Gastrocnemius medialis (tissue), 4 donors: ENCODE measurements at regions of chr21 and their contacts with region 1.

Region 1: DNA sequence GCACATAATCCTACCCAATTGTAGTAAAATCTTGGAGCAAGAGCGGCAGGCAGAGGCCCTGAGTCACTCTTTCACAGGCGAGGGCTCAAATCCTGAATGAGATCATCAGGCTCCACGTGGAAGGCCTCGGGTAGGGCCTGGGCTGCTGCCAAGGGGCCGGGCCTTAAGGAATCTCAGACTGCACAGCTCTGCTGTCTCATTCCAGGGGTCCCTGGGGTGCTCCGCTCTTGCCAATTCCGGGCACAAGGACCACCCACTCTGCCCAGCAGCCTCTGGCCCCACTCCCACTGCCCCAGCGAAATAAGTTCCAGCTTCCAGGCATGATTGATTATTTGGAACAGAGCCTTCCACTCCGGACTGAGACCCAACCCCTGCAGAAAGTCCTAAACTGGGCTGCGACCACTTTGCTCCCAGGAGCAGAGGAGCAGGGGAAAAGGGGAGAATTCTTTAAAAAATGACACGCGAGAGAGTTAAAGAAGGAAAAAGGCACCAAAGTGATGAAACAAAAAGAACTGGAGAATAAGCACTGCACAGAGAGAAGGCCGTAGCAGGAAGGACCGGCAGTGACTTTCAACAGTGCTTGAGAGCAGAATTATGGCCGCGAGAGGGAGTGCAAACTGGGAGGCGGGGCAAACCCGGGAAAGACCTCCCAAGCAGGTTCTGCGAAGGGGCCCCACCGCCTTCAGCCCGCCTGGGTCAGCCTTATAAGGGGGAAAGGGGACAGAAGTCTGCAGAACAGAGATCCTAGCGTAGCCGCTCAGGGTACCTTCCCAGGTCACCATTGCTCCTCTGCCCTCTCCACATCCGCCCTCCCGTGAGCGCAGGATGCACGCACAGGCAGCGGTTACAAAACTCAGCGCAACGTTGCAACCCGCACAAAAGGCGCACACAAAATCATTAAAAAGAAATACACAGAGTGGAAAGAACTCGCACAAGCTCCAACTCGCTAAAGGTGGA is 2.0 kb downstream of the ADAMTS1 start:
- DNase-seq: peak; percentile 85 to 96
- ATAC-seq: peak; percentile 61 to 62
- H3K4me3 ChIP-seq: peak overlapping the region; percentile 65 to 88 (median 80)
- H3K27ac ChIP-seq: peak overlapping the region; percentile 88 to 96 (median 90)
- H3K4me1 ChIP-seq: peaks cover 29 to 43% of the 10 kb centered on the region in 2 donors
- H3K27me3 ChIP-seq: no peaks in the 10 kb centered on the region
- CTCF ChIP-seq: peak in 2 of 5 experiments; percentile 48 to 54
- POLR2A ChIP-seq: peak; percentile 28 to 57

Region 2: DNA sequence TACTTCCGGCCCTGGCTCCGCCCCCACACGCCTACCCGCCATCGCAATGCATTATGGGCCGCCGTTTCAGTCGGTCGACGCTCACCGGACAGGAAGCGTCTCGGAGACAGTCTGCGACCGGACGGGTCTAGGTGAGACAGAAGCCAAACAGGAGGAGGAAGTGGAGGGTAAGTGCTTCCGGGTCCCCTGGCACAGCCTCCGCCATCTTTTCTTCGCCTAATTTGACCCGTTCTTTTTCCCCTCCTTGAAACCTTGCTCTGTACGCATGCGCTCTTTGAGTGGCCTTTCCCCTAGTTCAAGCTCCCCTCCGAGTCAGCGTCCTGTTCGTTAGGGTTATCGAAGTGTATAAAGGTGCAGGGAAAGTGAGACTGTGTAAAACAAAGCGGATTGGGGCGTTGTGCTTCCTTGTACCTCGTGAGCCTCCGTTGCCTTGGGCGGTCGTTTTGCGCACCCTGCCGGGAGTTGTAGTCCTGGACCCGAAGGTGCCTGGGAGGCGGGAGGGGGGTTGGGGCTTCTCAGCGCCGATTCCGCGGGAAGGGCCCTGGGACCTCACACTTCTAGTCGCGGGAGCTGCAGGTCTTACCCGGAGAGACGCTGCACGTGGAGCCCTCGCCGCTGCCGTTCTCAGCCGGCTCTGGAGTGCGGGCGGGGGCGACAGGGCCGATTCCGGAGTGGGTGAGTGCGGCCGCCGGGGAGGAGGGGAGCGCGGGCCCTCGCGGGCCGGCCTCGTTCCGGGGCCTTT is 1108.2 kb before region 1 on chr21 and contains the starts of genes ATP5PF and GABPA:
- in situ Hi-C with region 1: no loop called
- intact Hi-C with region 1: loop called (anchors 2 kb)
- DNase-seq: peak; percentile 97 to 98
- ATAC-seq: peak; percentile 90 to 94
- H3K4me3 ChIP-seq: peak within 1 kb of the TSS; percentile 81 to 98 (median 92)
- H3K27ac ChIP-seq: peak within 1 kb of the TSS; percentile 94 to 99 (median 98)
- H3K4me1 ChIP-seq: peaks cover 57 to 58% of the 10 kb centered on the region in 2 donors
- H3K27me3 ChIP-seq: no peaks in the 10 kb centered on the region
- CTCF ChIP-seq: no peak
- POLR2A ChIP-seq: peak in 1 of 2 donors; percentile 46
- total RNA-seq, gene ATP5PF: 155 to 306 (median 198) TPM
- total RNA-seq, gene GABPA: 10.6 to 26.2 (median 15.5) TPM

Region 3: DNA sequence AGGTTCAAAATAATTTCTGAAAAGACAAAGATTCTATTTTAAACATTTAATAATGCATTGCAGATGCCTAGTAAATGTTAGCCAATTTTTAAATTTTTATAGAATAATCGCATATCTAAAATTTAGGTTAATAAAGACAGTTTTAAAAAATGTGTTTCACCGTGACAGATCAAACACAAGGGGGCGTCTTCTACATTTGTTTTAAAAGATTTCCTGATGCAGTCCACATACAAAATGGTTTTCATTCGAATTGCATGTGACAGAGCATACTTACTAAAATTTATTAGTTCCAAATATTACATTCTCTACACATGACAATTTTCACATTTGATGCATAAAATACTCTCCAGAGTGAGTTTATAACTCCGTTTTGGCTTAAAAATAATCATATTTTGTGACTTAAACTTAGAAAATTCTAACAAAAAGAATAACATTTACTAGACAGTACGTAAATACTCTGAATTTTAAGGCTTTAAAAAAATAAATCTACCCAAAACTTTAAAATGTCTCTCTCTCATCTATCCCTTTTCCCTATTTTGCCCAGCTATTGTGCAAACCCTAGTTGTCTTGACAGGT is 73.6 kb before region 1 on chr21:
- in situ Hi-C with region 1: loop called in 2 of 4 experiments (anchors 5 to 10 kb)
- intact Hi-C with region 1: loop called (anchors 2 kb)
- DNase-seq: no peak
- ATAC-seq: no peak
- H3K4me3 ChIP-seq: no peak overlapping the region
- H3K27ac ChIP-seq: no peak overlapping the region
- H3K4me1 ChIP-seq: peaks cover 0 to 5% of the 10 kb centered on the region in 2 donors
- H3K27me3 ChIP-seq: no peaks in the 10 kb centered on the region
- CTCF ChIP-seq: peak in 4 of 5 experiments; percentile 39 to 68 (median 49)
- POLR2A ChIP-seq: no peak

Region 4: DNA sequence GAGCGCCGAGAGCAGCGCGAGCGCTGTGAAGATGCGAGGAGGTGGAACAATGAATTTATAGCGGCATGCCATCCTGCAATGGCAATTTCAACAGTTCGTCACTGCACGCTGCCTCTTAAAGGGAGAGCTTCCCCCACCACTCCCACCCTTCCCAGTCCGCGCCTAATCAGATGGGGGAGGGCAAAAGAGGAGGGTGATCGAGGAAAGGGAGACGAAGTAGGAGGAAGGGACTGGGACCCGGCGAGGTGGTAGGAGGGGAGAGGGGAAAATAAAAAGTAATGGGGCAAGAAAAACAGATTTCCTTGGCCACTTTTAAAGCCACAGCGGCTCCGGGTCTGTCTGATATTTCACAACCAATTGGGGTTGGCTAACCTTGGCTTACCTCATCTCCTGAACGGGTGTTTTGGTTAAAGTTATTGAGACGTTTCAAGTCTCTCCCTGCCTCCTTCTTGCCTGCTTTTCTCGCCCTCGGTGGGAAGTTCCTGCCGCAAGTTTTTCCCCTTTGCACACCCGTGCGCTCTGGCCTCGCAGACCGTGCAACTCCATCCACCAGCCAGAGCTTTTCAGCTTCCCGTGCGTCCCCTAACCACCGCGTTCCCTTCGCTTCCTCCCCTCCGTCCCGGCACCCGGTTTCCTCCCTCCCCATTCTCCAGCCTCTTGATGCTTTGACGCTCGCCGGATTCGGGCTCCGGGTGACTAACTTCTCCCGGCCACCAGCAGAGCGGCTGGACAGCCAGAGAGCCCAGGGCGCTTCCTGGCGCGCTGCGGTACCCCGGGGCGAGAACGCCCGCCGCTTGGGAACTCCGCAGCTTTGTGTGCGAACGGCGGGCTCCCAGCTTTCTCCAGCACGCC is 124.0 kb after region 1 on chr21 and contains the start of gene ADAMTS5:
- in situ Hi-C with region 1: no loop called
- intact Hi-C with region 1: loop called (anchors 1 kb)
- DNase-seq: peak; percentile 48 to 59
- ATAC-seq: peak; percentile 54 to 65
- H3K4me3 ChIP-seq: peak within 1 kb of the TSS; percentile 63 to 71 (median 68)
- H3K27ac ChIP-seq: peak within 1 kb of the TSS; percentile 72 to 79 (median 77)
- H3K4me1 ChIP-seq: peaks cover 0 to 19% of the 10 kb centered on the region in 2 donors
- H3K27me3 ChIP-seq: peaks cover 7 to 18% (median 9%) of the 10 kb centered on the region in 3 donors
- CTCF ChIP-seq: no peak
- POLR2A ChIP-seq: peak in 1 of 2 donors; percentile 60
- total RNA-seq, gene ADAMTS5: 4.3 to 9.0 (median 7.4) TPM

Region 5: GRCh38 chr21:27636656-27637055 is 793.4 kb after region 1 on chr21:
- in situ Hi-C with region 1: no loop called
- intact Hi-C with region 1: loop called (anchors 1 kb)
- DNase-seq: peak; percentile 73 to 85
- ATAC-seq: peak; percentile 99 to 100
- H3K4me3 ChIP-seq: peak overlapping the region in 1 of 4 donors; percentile 3
- H3K27ac ChIP-seq: peak overlapping the region; percentile 83 to 93 (median 88)
- H3K4me1 ChIP-seq: peaks cover 10 to 18% of the 10 kb centered on the region in 2 donors
- H3K27me3 ChIP-seq: no peaks in the 10 kb centered on the region
- CTCF ChIP-seq: no peak
- POLR2A ChIP-seq: peak in 1 of 2 donors; percentile 43

Region 6: DNA sequence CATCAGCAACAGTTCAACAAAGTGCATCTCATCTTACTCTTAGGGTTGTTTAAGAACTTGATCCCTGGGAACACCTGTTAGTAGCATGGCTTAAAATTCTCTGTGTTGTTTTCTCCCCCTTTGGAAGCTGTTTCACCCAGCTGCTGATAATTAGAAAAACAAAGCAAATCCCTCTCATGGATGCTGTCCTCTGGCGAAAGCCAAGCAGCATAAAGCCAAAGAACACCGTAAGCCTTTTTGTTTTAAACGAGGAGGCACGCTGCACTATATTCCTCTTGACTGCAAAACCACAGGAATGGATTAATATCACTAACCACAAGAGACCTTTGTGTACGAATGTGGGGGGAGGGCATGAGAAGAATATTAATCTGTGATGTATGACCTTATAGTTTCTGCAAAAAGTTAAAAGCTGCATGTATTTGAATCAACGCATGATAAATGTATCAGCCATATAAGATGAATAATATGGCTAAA is 1226.2 kb after region 1 on chr21:
- in situ Hi-C with region 1: loop called in 3 of 4 experiments (anchors 10 to 25 kb)
- intact Hi-C with region 1: loop called (anchors 5 kb)
- DNase-seq: peak in 1 of 2 donors; percentile 25
- ATAC-seq: peak; percentile 63 to 70
- H3K4me3 ChIP-seq: peak overlapping the region; percentile 9 to 38 (median 20)
- H3K27ac ChIP-seq: peak overlapping the region; percentile 87 to 91 (median 88)
- H3K4me1 ChIP-seq: peaks cover 17 to 43% of the 10 kb centered on the region in 2 donors
- H3K27me3 ChIP-seq: no peaks in the 10 kb centered on the region
- CTCF ChIP-seq: no peak
- POLR2A ChIP-seq: no peak

Region 7: DNA sequence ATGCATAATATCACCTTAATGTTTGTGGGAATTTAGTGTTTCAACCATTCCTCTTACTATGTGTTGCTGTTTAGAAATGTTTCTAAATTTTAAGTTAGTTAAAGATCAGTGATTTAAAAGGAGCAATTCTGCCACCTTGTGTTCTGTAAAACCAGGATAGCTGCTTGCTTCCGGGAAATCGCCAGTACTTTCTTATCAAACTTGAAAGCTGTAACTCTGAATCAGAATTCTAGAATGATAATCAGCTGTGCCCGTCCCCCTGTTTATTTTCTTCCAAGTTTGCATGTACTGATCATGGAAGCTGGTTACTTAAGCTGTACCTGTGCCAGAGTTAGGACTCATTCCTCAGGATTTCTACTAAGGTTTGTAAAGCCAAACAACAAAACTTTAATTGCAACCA is 1493.1 kb after region 1 on chr21:
- in situ Hi-C with region 1: loop called in 2 of 4 experiments (anchors 5 kb)
- intact Hi-C with region 1: loop called (anchors 2 kb)
- DNase-seq: no peak
- ATAC-seq: peak; percentile 57 to 65
- H3K4me3 ChIP-seq: no peak overlapping the region
- H3K27ac ChIP-seq: no peak overlapping the region
- H3K4me1 ChIP-seq: peaks cover 0 to 18% of the 10 kb centered on the region in 2 donors
- H3K27me3 ChIP-seq: no peaks in the 10 kb centered on the region
- CTCF ChIP-seq: peak in 4 of 5 experiments; percentile 21 to 64 (median 56)
- POLR2A ChIP-seq: no peak